ENCODE measurements at regions of chr17 and their contacts with region 1.

Region 1: GRCh38 chr17:8894673-8895578 is 27.5 kb upstream of the PIK3R6 start:
- DNase-seq: peak in 7 of 9 experiments; percentile 30 to 79 (median 60)
- ATAC-seq: peak; percentile 35
- H3K4me3 ChIP-seq: no peak overlapping the region
- H3K4me3 Mint-ChIP-seq: no peak overlapping the region
- H3K27ac ChIP-seq: no peak overlapping the region
- H3K27ac Mint-ChIP-seq: peak overlapping the region; percentile 29
- H3K4me1 ChIP-seq: peaks cover 56% of the 10 kb centered on the region
- H3K4me1 Mint-ChIP-seq: peaks cover 56% of the 10 kb centered on the region
- H3K27me3 ChIP-seq: no peaks in the 10 kb centered on the region
- H3K27me3 Mint-ChIP-seq: no peaks in the 10 kb centered on the region
- CTCF ChIP-seq: peak; percentile 76

Region 2: GRCh38 chr17:8753976-8754440 is 140.9 kb before region 1 on chr17:
- CTCF ChIA-PET with region 1: interaction called, 4 read pairs
- POLR2A ChIA-PET with region 1: no interaction called
- intact Hi-C with region 1: loop called in 1 of 2 experiments (anchors 1 kb)
- DNase-seq: peak in 2 of 9 experiments; percentile 19 to 40
- ATAC-seq: no peak
- H3K4me3 ChIP-seq: no peak overlapping the region
- H3K4me3 Mint-ChIP-seq: no peak overlapping the region
- H3K27ac ChIP-seq: no peak overlapping the region
- H3K27ac Mint-ChIP-seq: no peak overlapping the region
- H3K4me1 ChIP-seq: no peaks in the 10 kb centered on the region
- H3K4me1 Mint-ChIP-seq: no peaks in the 10 kb centered on the region
- H3K27me3 ChIP-seq: no peaks in the 10 kb centered on the region
- H3K27me3 Mint-ChIP-seq: peaks cover 13% of the 10 kb centered on the region
- CTCF ChIP-seq: no peak

Region 3: DNA sequence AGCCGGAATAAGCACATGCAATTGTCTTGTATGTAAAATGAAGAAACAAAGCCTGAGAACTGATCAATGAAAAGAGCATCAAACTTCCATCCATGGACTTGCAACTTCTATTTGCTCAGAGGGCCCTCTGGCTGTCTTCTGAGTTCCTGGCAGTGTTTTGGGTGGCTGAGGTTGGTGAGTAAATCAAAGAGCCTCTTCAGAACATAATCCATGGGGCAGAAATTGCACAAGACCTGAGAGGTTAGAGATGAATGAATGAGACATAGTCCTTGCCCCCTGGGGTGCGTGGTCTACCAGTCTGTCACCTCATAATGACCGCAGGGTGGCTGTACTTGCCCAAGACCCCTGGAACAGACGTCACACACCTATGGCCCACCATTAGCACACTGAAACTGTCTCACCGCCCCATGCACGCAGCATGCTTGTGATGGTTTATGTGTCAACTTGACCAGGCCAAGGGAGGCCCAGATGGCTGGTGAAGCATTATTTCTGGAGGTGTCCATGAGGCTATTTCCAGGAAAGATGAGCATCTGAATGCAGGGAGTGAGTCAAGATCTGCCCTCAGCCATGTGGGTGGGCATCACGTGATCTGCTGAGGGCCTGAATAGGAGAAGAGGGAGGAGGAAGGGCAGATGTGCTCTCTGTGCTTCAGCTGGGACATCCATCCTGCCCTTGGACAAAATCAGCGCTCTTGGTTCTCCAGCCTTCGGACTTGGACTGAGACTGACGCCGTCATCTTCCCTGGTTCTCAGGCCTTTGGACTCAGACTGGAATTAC is 35.7 kb before region 1 on chr17:
- CTCF ChIA-PET with region 1: no interaction called
- POLR2A ChIA-PET with region 1: no interaction called
- intact Hi-C with region 1: no loop called
- DNase-seq: peak in 1 of 9 experiments; percentile 25
- ATAC-seq: no peak
- H3K4me3 ChIP-seq: no peak overlapping the region
- H3K4me3 Mint-ChIP-seq: no peak overlapping the region
- H3K27ac ChIP-seq: no peak overlapping the region
- H3K27ac Mint-ChIP-seq: no peak overlapping the region
- H3K4me1 ChIP-seq: peaks cover 13% of the 10 kb centered on the region
- H3K4me1 Mint-ChIP-seq: peaks cover 36% of the 10 kb centered on the region
- H3K27me3 ChIP-seq: no peaks in the 10 kb centered on the region
- H3K27me3 Mint-ChIP-seq: no peaks in the 10 kb centered on the region
- CTCF ChIP-seq: no peak

Region 4: GRCh38 chr17:8875957-8876356 is 19.0 kb before region 1 on chr17:
- CTCF ChIA-PET with region 1: interaction called, 10 read pairs
- POLR2A ChIA-PET with region 1: interaction called, 3 read pairs
- intact Hi-C with region 1: no loop called
- DNase-seq: peak in 1 of 9 experiments; percentile 3
- ATAC-seq: no peak
- H3K4me3 ChIP-seq: no peak overlapping the region
- H3K4me3 Mint-ChIP-seq: no peak overlapping the region
- H3K27ac ChIP-seq: no peak overlapping the region
- H3K27ac Mint-ChIP-seq: no peak overlapping the region
- H3K4me1 ChIP-seq: no peaks in the 10 kb centered on the region
- H3K4me1 Mint-ChIP-seq: peaks cover 9% of the 10 kb centered on the region
- H3K27me3 ChIP-seq: no peaks in the 10 kb centered on the region
- H3K27me3 Mint-ChIP-seq: no peaks in the 10 kb centered on the region
- CTCF ChIP-seq: no peak

Region 5: DNA sequence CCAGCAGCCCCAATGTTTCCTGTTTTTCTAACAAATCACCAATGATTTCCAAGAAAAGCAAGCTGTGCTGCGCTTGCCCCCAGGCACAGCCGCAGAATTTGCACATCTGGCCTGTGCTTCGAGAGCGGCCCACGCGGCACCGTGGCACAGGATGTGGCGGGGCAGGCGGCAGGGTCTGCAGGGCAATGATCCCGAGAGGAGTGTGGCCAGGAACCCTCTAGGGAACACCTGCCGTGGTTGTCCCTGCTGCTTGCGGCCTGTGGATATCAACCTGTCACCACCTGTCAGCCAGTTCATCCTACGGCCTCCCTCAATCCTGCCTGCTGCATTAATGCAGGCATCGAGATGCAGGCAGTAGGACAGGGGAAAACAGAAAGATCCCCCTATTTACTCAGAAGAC is 46.6 kb after region 1 on chr17:
- CTCF ChIA-PET with region 1: interaction called, 5 read pairs
- POLR2A ChIA-PET with region 1: interaction called, 30 read pairs
- intact Hi-C with region 1: loop called in 1 of 2 experiments (anchors 5 kb)
- DNase-seq: peak in 8 of 9 experiments; percentile 43 to 87 (median 72)
- ATAC-seq: peak; percentile 41
- H3K4me3 ChIP-seq: peak overlapping the region; percentile 32 to 43
- H3K4me3 Mint-ChIP-seq: peak overlapping the region; percentile 63
- H3K27ac ChIP-seq: peak overlapping the region; percentile 64 to 76
- H3K27ac Mint-ChIP-seq: peak overlapping the region; percentile 97
- H3K4me1 ChIP-seq: peaks cover 79% of the 10 kb centered on the region
- H3K4me1 Mint-ChIP-seq: peaks cover 88% of the 10 kb centered on the region
- H3K27me3 ChIP-seq: no peaks in the 10 kb centered on the region
- H3K27me3 Mint-ChIP-seq: no peaks in the 10 kb centered on the region
- CTCF ChIP-seq: no peak

Region 6: GRCh38 chr17:8960325-8961140 is 65.6 kb after region 1 on chr17:
- CTCF ChIA-PET with region 1: interaction called, 10 read pairs
- POLR2A ChIA-PET with region 1: interaction called, 27 read pairs
- intact Hi-C with region 1: loop called (anchors 1 kb)
- DNase-seq: peak in 2 of 9 experiments; percentile 28 to 58
- ATAC-seq: no peak
- H3K4me3 ChIP-seq: peak overlapping the region in 1 of 2 experiments; percentile 10
- H3K4me3 Mint-ChIP-seq: peak overlapping the region; percentile 44
- H3K27ac ChIP-seq: peak overlapping the region in 1 of 2 experiments; percentile 85
- H3K27ac Mint-ChIP-seq: peak overlapping the region; percentile 91
- H3K4me1 ChIP-seq: peaks cover 88% of the 10 kb centered on the region
- H3K4me1 Mint-ChIP-seq: peaks cover 90% of the 10 kb centered on the region
- H3K27me3 ChIP-seq: no peaks in the 10 kb centered on the region
- H3K27me3 Mint-ChIP-seq: no peaks in the 10 kb centered on the region
- CTCF ChIP-seq: no peak

Region 7: GRCh38 chr17:8965394-8966168 is 70.7 kb after region 1 on chr17 and contains the start of gene PIK3R5:
- CTCF ChIA-PET with region 1: interaction called, 10 read pairs
- POLR2A ChIA-PET with region 1: interaction called, 27 read pairs
- intact Hi-C with region 1: loop called (anchors 1 kb)
- DNase-seq: peak; percentile 68 to 91 (median 79)
- ATAC-seq: peak; percentile 77
- H3K4me3 ChIP-seq: peak within 1 kb of the TSS; percentile 97 to 99
- H3K4me3 Mint-ChIP-seq: peak within 1 kb of the TSS; percentile 96
- H3K27ac ChIP-seq: peak within 1 kb of the TSS; percentile 83 to 85
- H3K27ac Mint-ChIP-seq: peak within 1 kb of the TSS; percentile 97
- H3K4me1 ChIP-seq: peaks cover 39% of the 10 kb centered on the region
- H3K4me1 Mint-ChIP-seq: peaks cover 48% of the 10 kb centered on the region
- H3K27me3 ChIP-seq: no peaks in the 10 kb centered on the region
- H3K27me3 Mint-ChIP-seq: no peaks in the 10 kb centered on the region
- CTCF ChIP-seq: no peak
- total RNA-seq, gene PIK3R5: 154 to 155 TPM